ENCODE measurements at regions of chr11 and their contacts with region 1.

Region 1: GRCh38 chr11:111230122-111230465 is 15.4 kb upstream of the POU2AF2 start:
- DNase-seq: peak; percentile 24
- CTCF ChIP-seq: no peak

Region 2: GRCh38 chr11:110463153-110463552 is 766.9 kb before region 1 on chr11:
- in situ Hi-C with region 1: loop called (anchors 25 kb)
- DNase-seq: no peak
- CTCF ChIP-seq: peak; percentile 46

Region 3: GRCh38 chr11:111944651-111945051 is 714.6 kb after region 1 on chr11:
- in situ Hi-C with region 1: no loop called
- DNase-seq: no peak
- CTCF ChIP-seq: no peak

Measured in GM13977 (cell line).